ENCODE measurements at regions of chr5 and their contacts with region 1.

Region 1: DNA sequence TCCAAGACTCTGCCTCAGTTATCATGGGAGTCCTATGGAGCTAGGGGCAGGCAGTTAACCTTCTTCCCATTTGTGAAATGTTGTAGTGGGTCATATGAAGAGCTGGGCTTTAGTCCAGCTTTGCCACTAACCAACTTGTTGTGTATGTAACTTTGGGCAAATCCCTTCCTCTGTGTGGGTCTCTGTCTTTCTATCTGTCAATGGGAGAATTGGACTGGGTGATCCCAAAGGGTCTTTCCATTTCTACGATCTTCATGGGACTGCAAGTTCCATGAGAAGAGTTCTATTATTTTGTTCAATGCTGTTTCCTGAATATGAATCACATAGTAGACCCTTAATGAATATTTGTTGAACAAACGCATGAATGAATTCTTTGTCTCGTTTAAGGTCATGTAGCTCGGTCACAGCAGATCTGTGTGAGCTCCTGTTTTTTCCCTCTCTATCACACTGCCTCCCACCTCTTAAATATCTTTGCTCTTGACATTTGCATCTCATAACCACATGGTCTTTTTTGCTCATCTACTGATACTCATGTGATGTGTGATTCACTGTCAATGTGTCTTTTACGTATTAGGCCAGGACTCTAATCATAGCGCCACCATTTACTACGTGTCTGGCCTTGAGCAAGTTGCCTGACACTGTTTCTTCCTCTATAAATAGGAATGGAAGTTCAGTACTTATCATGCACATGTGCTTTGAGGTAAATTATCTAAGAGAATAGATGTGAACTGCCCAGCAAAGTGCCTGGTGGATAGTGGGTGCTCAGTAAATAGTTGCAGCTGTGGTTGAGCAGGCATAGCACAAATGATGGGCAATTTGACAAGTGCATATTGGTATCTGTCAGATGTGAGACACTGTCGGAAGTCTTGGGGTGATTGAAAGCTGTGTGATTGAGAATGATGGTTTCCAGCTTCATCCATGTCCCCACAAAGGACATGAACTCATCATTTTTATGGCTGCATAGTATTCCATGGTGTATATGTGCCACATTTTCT is 37.4 kb downstream of the PTTG1 start:
- DNase-seq: peak; percentile 92
- ATAC-seq: peak; percentile 77
- H3K4me3 ChIP-seq: no peak overlapping the region
- H3K27ac ChIP-seq: peak overlapping the region; percentile 70
- H3K4me1 ChIP-seq: peaks cover 45% of the 10 kb centered on the region
- H3K27me3 ChIP-seq: no peaks in the 10 kb centered on the region
- CTCF ChIP-seq: no peak
- EP300 ChIP-seq: peak; percentile 92 to 98; a peak in 3 of 4 replicates
- POLR2A ChIP-seq: peak; percentile 60; the same call in 1 of the 2 replicates
- RAD21 ChIP-seq: no peak

Region 2: DNA sequence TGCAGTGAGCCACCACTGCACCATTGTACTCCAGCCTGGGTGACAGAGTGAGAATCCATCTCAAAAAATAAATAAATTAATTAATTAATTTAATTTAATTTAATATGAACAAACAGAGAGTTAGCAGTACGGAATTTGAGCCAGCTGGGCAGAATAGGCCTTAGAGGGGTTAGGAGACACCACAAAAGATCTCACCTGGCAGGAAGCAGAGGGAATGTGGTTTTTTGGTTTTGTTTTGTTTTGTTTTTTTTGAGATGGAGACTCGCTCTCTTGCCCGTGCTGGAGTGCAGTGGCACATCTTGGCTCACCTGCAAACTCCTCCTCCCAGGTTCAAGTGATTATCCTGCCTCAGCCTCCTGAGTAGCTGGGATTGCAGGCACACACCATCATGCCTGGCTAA is 308.1 kb before region 1 on chr5:
- CTCF ChIA-PET with region 1: no interaction called
- POLR2A ChIA-PET with region 1: no interaction called
- RAD21 ChIA-PET with region 1: no interaction called
- SMC1A ChIA-PET with region 1: no interaction called
- in situ Hi-C with region 1: no loop called
- intact Hi-C with region 1: no loop called
- DNase-seq: no peak
- ATAC-seq: no peak
- H3K4me3 ChIP-seq: no peak overlapping the region
- H3K27ac ChIP-seq: no peak overlapping the region
- H3K4me1 ChIP-seq: peaks cover 28% of the 10 kb centered on the region
- H3K27me3 ChIP-seq: no peaks in the 10 kb centered on the region
- CTCF ChIP-seq: no peak
- EP300 ChIP-seq: no peak
- POLR2A ChIP-seq: no peak
- RAD21 ChIP-seq: no peak

Region 3: DNA sequence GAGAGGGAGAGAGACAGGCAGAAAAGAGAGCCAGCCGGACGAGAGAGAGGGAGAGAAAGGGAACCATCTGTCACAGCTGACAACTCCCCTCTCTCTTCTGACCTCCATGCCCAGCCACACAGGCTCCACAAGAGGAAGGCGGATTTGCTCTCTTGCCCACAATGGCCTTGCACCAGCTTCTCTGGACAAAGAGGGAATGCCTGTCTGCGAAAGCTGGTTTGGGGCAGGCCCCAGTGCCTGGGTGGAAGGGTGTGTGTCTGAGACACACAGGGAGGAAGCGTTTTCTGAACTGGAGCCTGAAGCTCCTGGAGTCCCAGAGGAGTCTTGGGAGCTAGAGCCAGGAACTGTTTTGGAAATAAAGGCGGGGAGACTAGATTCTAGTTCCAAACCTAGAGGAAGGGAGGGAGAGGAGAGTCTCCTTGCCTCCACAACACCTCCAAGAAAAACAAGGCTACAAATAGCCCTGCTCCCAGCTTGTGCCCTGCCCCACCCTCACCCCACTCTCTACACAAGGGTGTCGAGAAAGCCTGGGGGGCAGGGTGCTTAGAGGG is 101.2 kb before region 1 on chr5:
- CTCF ChIA-PET with region 1: no interaction called
- POLR2A ChIA-PET with region 1: no interaction called
- RAD21 ChIA-PET with region 1: no interaction called
- SMC1A ChIA-PET with region 1: no interaction called
- in situ Hi-C with region 1: no loop called
- intact Hi-C with region 1: no loop called
- DNase-seq: no peak
- ATAC-seq: no peak
- H3K4me3 ChIP-seq: no peak overlapping the region
- H3K27ac ChIP-seq: no peak overlapping the region
- H3K4me1 ChIP-seq: no peaks in the 10 kb centered on the region
- H3K27me3 ChIP-seq: no peaks in the 10 kb centered on the region; a peak in 1 of 4 replicates
- CTCF ChIP-seq: no peak
- EP300 ChIP-seq: no peak
- POLR2A ChIP-seq: no peak
- RAD21 ChIP-seq: no peak

Region 4: DNA sequence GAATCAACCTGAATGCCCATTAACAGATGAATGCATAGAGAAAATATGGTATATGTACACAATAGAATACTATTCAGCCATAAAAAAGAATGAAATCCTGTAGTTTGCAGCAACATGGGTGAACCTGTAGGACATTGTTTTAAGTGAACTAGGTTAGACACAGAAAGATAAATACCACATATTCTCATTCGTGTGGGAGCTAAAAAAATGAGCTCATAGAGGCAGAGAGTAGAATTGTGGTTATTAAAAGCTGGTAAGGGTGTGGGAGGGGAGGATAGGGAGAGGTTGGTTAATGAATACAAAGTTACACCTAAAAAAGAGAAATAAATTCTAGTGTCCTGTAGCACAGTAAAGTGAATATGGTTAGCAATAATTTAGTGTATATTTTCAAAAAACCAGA is 14.0 kb before region 1 on chr5:
- CTCF ChIA-PET with region 1: interaction called, 230 read pairs
- POLR2A ChIA-PET with region 1: interaction called, 156 read pairs
- RAD21 ChIA-PET with region 1: interaction called, 329 read pairs
- SMC1A ChIA-PET with region 1: interaction called, 511 read pairs
- in situ Hi-C with region 1: no loop called
- intact Hi-C with region 1: loop called (anchors 1 kb)
- DNase-seq: no peak
- ATAC-seq: peak; percentile 37
- H3K4me3 ChIP-seq: no peak overlapping the region
- H3K27ac ChIP-seq: no peak overlapping the region
- H3K4me1 ChIP-seq: peaks cover 62% of the 10 kb centered on the region
- H3K27me3 ChIP-seq: no peaks in the 10 kb centered on the region
- CTCF ChIP-seq: no peak
- EP300 ChIP-seq: peak in 1 of 2 experiments; percentile 39; a peak in 1 of 4 replicates
- POLR2A ChIP-seq: no peak
- RAD21 ChIP-seq: no peak

Region 5: DNA sequence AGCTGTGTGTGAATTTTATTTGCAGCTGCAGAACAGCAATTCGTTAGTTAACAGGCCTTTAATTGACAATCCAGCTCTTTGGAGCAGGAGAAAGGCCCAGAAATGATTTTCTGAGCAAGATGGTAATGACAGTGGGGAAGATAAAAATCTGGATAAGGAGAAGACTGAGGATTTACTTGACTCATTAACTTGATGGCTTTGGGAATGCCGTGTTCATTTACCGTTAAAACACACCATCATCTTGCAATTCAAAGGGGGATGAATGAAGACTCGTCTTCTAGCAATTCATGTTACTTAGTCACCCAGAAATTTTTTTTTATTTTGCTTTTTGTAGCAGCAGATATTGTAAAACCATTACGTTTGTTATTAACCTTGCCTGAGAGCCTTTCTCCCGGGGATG is 14.6 kb after region 1 on chr5:
- CTCF ChIA-PET with region 1: interaction called, 4 read pairs
- POLR2A ChIA-PET with region 1: interaction called, 52 read pairs
- RAD21 ChIA-PET with region 1: interaction called, 44 read pairs
- SMC1A ChIA-PET with region 1: interaction called, 59 read pairs
- in situ Hi-C with region 1: no loop called
- intact Hi-C with region 1: no loop called
- DNase-seq: no peak
- ATAC-seq: no peak
- H3K4me3 ChIP-seq: peak overlapping the region; percentile 88
- H3K27ac ChIP-seq: peak overlapping the region; percentile 54
- H3K4me1 ChIP-seq: peaks cover 18% of the 10 kb centered on the region
- H3K27me3 ChIP-seq: no peaks in the 10 kb centered on the region
- CTCF ChIP-seq: no peak
- EP300 ChIP-seq: no peak
- POLR2A ChIP-seq: no peak
- RAD21 ChIP-seq: no peak

Region 6: GRCh38 chr5:160479926-160480325 is 20.8 kb after region 1 on chr5:
- CTCF ChIA-PET with region 1: interaction called, 7 read pairs
- POLR2A ChIA-PET with region 1: interaction called, 52 read pairs
- RAD21 ChIA-PET with region 1: interaction called, 17 read pairs
- SMC1A ChIA-PET with region 1: interaction called, 59 read pairs
- in situ Hi-C with region 1: no loop called
- intact Hi-C with region 1: no loop called
- DNase-seq: no peak
- ATAC-seq: peak; percentile 8; the same call in 2 of the 3 replicates
- H3K4me3 ChIP-seq: no peak overlapping the region
- H3K27ac ChIP-seq: no peak overlapping the region
- H3K4me1 ChIP-seq: peaks cover 13% of the 10 kb centered on the region; the same call in 1 of the 2 replicates
- H3K27me3 ChIP-seq: no peaks in the 10 kb centered on the region
- CTCF ChIP-seq: no peak
- EP300 ChIP-seq: no peak
- POLR2A ChIP-seq: no peak
- RAD21 ChIP-seq: no peak

Measured in GM12878 (cell line).